ENCODE measurements at regions of chr15 and their contacts with region 1.

Region 1: DNA sequence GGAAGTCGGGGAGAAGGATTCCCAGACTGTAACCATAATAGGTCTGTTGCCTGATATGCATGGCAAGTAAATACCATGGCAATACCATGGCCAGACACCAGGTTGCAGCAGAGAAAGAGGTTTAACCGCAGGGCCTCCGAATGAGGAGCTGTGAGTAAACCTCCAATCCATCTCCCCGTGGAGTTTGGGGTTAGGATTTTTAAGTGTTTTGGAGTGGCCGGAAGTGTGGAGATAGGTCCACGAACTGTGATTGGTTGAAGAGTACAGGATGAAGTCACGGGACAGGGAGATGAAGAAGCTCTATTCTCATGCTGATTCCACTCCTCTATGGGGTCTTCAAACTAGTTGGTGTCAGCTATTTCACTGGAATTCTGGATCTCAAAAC is 127.9 kb downstream of the ST8SIA2 start:
- DNase-seq: peak; percentile 88

Region 2: DNA sequence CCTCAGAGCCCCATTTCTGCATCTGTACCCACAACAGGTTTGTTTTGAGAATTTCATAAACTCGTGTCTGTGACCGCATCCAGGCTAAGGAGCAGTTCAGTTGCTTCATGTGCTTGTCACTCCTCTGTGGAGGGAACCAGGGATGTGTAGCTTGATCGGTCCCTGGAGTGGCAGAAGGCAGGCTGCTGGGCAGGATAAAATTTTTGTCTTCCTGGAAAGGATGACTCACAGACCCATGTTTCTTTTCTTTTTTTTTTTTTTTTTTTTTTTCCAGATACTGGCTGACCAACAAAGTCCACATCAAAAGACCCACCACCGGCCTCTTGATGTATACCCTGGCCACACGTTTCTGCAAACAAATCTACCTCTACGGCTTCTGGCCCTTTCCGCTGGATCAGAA is 57.8 kb before region 1 on chr15:
- intact Hi-C with region 1: no loop called
- DNase-seq: no peak

Region 3: GRCh38 chr15:92586383-92586942 is 64.8 kb after region 1 on chr15:
- intact Hi-C with region 1: no loop called
- DNase-seq: no peak

Region 4: GRCh38 chr15:92714477-92715401 is 193.1 kb after region 1 on chr15:
- intact Hi-C with region 1: loop called (anchors 5 kb)
- DNase-seq: peak; percentile 90

Measured in posterior vena cava (tissue), 2 donors.